PC-9 (cell line): ENCODE measurements at regions of chr15 and their contacts with region 1.

Region 1: GRCh38 chr15:72117486-72118399 is at the start of gene MYO9A:
- DNase-seq: peak; percentile 87 to 97
- H3K4me3 ChIP-seq: peak within 1 kb of the TSS; percentile 73
- H3K27ac ChIP-seq: peak within 1 kb of the TSS; percentile 72
- H3K4me1 ChIP-seq: peaks cover 15% of the 10 kb centered on the region; the same call in 1 of the 2 replicates
- H3K27me3 ChIP-seq: no peaks in the 10 kb centered on the region
- CTCF ChIP-seq: no peak
- total RNA-seq, gene MYO9A: 34.0 and 37.3 TPM in 2 replicates

Region 2: DNA sequence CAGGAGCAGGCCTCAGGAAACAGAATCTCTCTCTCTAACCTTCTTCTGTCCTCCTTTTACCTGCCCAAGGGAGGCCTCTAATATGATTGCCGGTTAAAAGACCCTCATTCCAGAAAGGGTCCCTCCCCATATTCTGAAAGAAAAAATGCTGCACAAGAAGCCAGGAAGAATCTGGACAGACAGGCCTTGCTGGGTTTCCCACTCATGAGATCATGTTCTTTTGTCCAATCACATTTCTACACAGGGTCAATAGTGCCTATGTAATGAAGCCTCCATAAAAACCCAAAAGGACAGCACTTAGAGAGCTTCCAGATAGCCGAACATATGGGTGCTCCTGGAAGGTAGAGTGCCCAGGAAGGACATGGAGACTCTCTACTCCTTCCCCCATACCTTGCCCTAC is 145.8 kb before region 1 on chr15:
- CTCF ChIA-PET with region 1: interaction called, 4 read pairs
- POLR2A ChIA-PET with region 1: no interaction called
- intact Hi-C with region 1: loop called (anchors 2 kb)
- DNase-seq: peak; percentile 46 to 57
- H3K4me3 ChIP-seq: no peak overlapping the region
- H3K27ac ChIP-seq: peak overlapping the region; percentile 23; the same call in 1 of the 2 replicates
- H3K4me1 ChIP-seq: peaks cover 53% of the 10 kb centered on the region
- H3K27me3 ChIP-seq: no peaks in the 10 kb centered on the region
- CTCF ChIP-seq: no peak